ENCODE measurements at regions of chr1 and their contacts with region 1.

Region 1: GRCh38 chr1:64923294-64923721 is 43.0 kb downstream of the JAK1 start:
- DNase-seq: peak; percentile 46 to 55
- ATAC-seq: peak; percentile 61 to 83 (median 78)
- H3K4me3 ChIP-seq: no peak overlapping the region
- H3K4me3 Mint-ChIP-seq: peak overlapping the region; percentile 85
- H3K27ac ChIP-seq: peak overlapping the region; percentile 73
- H3K27ac Mint-ChIP-seq: peak overlapping the region; percentile 84 to 93
- H3K4me1 ChIP-seq: peaks cover 70% of the 10 kb centered on the region
- H3K4me1 Mint-ChIP-seq: peaks cover 95 to 96% of the 10 kb centered on the region in 2 donors
- H3K27me3 ChIP-seq: no peaks in the 10 kb centered on the region
- H3K27me3 Mint-ChIP-seq: no peaks in the 10 kb centered on the region
- CTCF ChIP-seq: no peak

Region 2: GRCh38 chr1:64348961-64349648 is 574.2 kb before region 1 on chr1:
- intact Hi-C with region 1: no loop called
- DNase-seq: no peak
- ATAC-seq: peak in 1 of 3 donors; percentile 48
- H3K4me3 ChIP-seq: no peak overlapping the region
- H3K4me3 Mint-ChIP-seq: no peak overlapping the region
- H3K27ac ChIP-seq: no peak overlapping the region
- H3K27ac Mint-ChIP-seq: no peak overlapping the region
- H3K4me1 ChIP-seq: no peaks in the 10 kb centered on the region
- H3K4me1 Mint-ChIP-seq: no peaks in the 10 kb centered on the region
- H3K27me3 ChIP-seq: no peaks in the 10 kb centered on the region
- H3K27me3 Mint-ChIP-seq: peaks cover 0 to under 1% of the 10 kb centered on the region in 2 donors
- CTCF ChIP-seq: no peak

Region 3: GRCh38 chr1:64654519-64655341 is 268.6 kb before region 1 on chr1:
- intact Hi-C with region 1: no loop called
- DNase-seq: no peak
- ATAC-seq: no peak
- H3K4me3 ChIP-seq: no peak overlapping the region
- H3K4me3 Mint-ChIP-seq: no peak overlapping the region
- H3K27ac ChIP-seq: no peak overlapping the region
- H3K27ac Mint-ChIP-seq: no peak overlapping the region
- H3K4me1 ChIP-seq: no peaks in the 10 kb centered on the region
- H3K4me1 Mint-ChIP-seq: no peaks in the 10 kb centered on the region
- H3K27me3 ChIP-seq: peaks cover 2% of the 10 kb centered on the region
- H3K27me3 Mint-ChIP-seq: peaks cover 14 to 26% of the 10 kb centered on the region in 2 donors
- CTCF ChIP-seq: no peak

Region 4: GRCh38 chr1:64882574-64883255 is 40.6 kb before region 1 on chr1:
- intact Hi-C with region 1: loop called (anchors 1 kb)
- DNase-seq: peak; percentile 45 to 60
- ATAC-seq: peak; percentile 73 to 88 (median 85)
- H3K4me3 ChIP-seq: no peak overlapping the region
- H3K4me3 Mint-ChIP-seq: peak overlapping the region; percentile 75
- H3K27ac ChIP-seq: peak overlapping the region; percentile 80
- H3K27ac Mint-ChIP-seq: peak overlapping the region; percentile 79 to 93
- H3K4me1 ChIP-seq: peaks cover 70% of the 10 kb centered on the region
- H3K4me1 Mint-ChIP-seq: peaks cover 94 to 98% of the 10 kb centered on the region in 2 donors
- H3K27me3 ChIP-seq: no peaks in the 10 kb centered on the region
- H3K27me3 Mint-ChIP-seq: no peaks in the 10 kb centered on the region
- CTCF ChIP-seq: no peak

Region 5: GRCh38 chr1:64891448-64891825 is 31.9 kb before region 1 on chr1:
- intact Hi-C with region 1: loop called (anchors 2 kb)
- DNase-seq: peak; percentile 44 to 46
- ATAC-seq: peak; percentile 54 to 72 (median 64)
- H3K4me3 ChIP-seq: peak overlapping the region; percentile 9
- H3K4me3 Mint-ChIP-seq: peak overlapping the region; percentile 83
- H3K27ac ChIP-seq: peak overlapping the region; percentile 55
- H3K27ac Mint-ChIP-seq: peak overlapping the region; percentile 86 to 93
- H3K4me1 ChIP-seq: peaks cover 69% of the 10 kb centered on the region
- H3K4me1 Mint-ChIP-seq: peaks cover 97% of the 10 kb centered on the region in 2 donors
- H3K27me3 ChIP-seq: no peaks in the 10 kb centered on the region
- H3K27me3 Mint-ChIP-seq: no peaks in the 10 kb centered on the region
- CTCF ChIP-seq: no peak

Region 6: DNA sequence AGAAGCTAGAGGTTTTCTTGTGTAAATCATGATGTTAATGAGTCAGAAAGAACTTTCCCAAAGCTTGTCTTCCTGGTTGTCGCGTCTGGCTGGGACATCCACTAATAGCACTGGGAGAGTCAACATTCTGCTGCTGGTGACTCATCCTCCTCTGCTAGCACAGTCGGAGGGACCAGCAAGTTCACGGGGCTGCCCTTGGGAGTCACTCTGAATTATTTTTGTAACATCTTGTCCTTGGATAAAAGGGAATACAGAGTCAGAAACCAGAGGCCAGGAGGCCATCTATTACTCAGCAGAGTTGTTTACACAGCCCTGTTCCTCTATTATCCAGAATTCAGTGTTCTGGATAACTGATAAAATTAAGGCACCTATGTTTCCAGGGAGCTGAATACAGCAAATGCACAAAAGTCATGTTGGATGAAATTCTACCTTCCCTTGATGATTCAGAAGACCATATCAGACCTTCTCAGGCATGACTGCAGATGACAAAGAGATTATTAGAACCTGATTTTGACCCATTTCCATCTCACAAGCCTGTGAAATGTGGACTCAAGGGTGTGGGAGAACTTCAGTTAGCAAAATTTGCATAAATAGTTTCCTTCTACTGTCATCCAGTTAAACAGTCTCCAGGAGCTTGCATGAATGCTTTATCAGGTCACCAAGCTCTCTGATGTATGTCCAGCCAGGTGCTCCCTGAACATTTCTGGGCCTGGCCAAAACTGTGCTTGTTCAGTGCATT is 25.0 kb before region 1 on chr1:
- intact Hi-C with region 1: loop called (anchors 2 kb)
- DNase-seq: peak; percentile 44 to 49
- ATAC-seq: peak; percentile 52 to 72 (median 72)
- H3K4me3 ChIP-seq: no peak overlapping the region
- H3K4me3 Mint-ChIP-seq: peak overlapping the region; percentile 7
- H3K27ac ChIP-seq: peak overlapping the region; percentile 51
- H3K27ac Mint-ChIP-seq: peak overlapping the region; percentile 86 to 93
- H3K4me1 ChIP-seq: peaks cover 53% of the 10 kb centered on the region
- H3K4me1 Mint-ChIP-seq: peaks cover 96 to 99% of the 10 kb centered on the region in 2 donors
- H3K27me3 ChIP-seq: no peaks in the 10 kb centered on the region
- H3K27me3 Mint-ChIP-seq: no peaks in the 10 kb centered on the region
- CTCF ChIP-seq: no peak

Region 7: GRCh38 chr1:64940025-64940424 is 16.7 kb after region 1 on chr1:
- intact Hi-C with region 1: loop called (anchors 2 kb)
- DNase-seq: no peak
- ATAC-seq: peak in 2 of 3 donors; percentile 40 to 53
- H3K4me3 ChIP-seq: no peak overlapping the region
- H3K4me3 Mint-ChIP-seq: peak overlapping the region; percentile 62
- H3K27ac ChIP-seq: peak overlapping the region; percentile 28
- H3K27ac Mint-ChIP-seq: peak overlapping the region; percentile 61 to 78
- H3K4me1 ChIP-seq: peaks cover 37% of the 10 kb centered on the region
- H3K4me1 Mint-ChIP-seq: peaks cover 77 to 82% of the 10 kb centered on the region in 2 donors
- H3K27me3 ChIP-seq: no peaks in the 10 kb centered on the region
- H3K27me3 Mint-ChIP-seq: no peaks in the 10 kb centered on the region
- CTCF ChIP-seq: no peak

Region 8: DNA sequence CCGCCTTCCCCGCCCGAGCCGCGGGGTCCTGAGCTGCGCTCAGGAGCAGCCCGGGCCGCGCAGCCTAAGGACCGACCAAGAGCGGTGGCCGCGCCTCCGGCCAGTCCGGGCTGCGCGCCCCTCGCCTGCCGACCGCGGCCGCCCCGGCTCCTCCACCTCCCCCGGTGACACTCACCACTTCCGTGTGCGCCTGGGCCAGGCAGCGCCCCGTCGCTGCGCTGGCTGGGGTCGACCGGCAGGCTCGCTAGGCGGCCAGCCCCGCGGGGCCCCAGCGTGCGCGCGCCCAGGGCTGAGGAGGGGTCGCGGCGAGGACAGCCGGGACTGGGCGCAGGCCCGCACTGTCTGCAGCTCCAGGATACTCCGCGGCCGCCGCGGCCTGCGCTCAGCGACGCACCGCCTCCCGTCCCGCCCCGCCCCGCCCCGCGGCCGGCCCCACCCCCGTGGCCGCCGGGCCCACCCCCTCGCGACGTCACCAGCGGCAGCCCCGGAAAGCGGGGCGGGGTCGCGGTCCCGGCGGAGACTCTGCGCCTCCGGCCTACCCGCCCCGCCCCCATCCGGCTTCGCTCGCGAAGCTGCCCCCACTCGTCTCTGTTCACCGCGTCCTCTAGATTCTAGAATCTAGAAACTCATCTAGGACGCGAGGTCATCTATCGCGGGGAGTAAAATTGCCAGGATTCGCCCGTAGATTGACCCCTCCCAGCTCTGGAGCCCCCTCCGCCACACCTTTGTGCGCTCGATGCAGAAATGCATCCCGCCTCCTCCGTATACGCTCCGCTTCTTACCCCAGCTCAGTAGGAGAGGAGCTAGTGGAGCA is 43.1 kb after region 1 on chr1 and contains the start of gene JAK1:
- intact Hi-C with region 1: loop called (anchors 1 kb)
- DNase-seq: peak; percentile 89 to 96
- ATAC-seq: peak; percentile 78 to 90 (median 78)
- H3K4me3 ChIP-seq: peak within 1 kb of the TSS; percentile 76
- H3K4me3 Mint-ChIP-seq: peak within 1 kb of the TSS; percentile 94
- H3K27ac ChIP-seq: peak within 1 kb of the TSS; percentile 89
- H3K27ac Mint-ChIP-seq: peak within 1 kb of the TSS in 1 of 2 donors; percentile 94
- H3K4me1 ChIP-seq: peaks cover 27% of the 10 kb centered on the region
- H3K4me1 Mint-ChIP-seq: peaks cover 50 to 51% of the 10 kb centered on the region in 2 donors
- H3K27me3 ChIP-seq: no peaks in the 10 kb centered on the region
- H3K27me3 Mint-ChIP-seq: no peaks in the 10 kb centered on the region
- CTCF ChIP-seq: no peak
- total RNA-seq, gene JAK1: 507 to 626 (median 526) TPM

Region 9: GRCh38 chr1:65002508-65003315 is 79.4 kb after region 1 on chr1:
- intact Hi-C with region 1: loop called (anchors 1 kb)
- DNase-seq: peak; percentile 85 to 86
- ATAC-seq: peak; percentile 88 to 94 (median 88)
- H3K4me3 ChIP-seq: peak overlapping the region; percentile 54
- H3K4me3 Mint-ChIP-seq: peak overlapping the region; percentile 66
- H3K27ac ChIP-seq: peak overlapping the region; percentile 44
- H3K27ac Mint-ChIP-seq: peak overlapping the region; percentile 4 to 92
- H3K4me1 ChIP-seq: peaks cover 23% of the 10 kb centered on the region
- H3K4me1 Mint-ChIP-seq: peaks cover 15 to 30% of the 10 kb centered on the region in 2 donors
- H3K27me3 ChIP-seq: no peaks in the 10 kb centered on the region
- H3K27me3 Mint-ChIP-seq: peaks cover 0 to 5% of the 10 kb centered on the region in 2 donors
- CTCF ChIP-seq: no peak